Activated CD8-positive, alpha-beta T cell treated with anti-CD3 and anti-CD28 coated beads for 36 hours (primary cell): ENCODE measurements at regions of chr11 and their contacts with region 1.

Region 1: DNA sequence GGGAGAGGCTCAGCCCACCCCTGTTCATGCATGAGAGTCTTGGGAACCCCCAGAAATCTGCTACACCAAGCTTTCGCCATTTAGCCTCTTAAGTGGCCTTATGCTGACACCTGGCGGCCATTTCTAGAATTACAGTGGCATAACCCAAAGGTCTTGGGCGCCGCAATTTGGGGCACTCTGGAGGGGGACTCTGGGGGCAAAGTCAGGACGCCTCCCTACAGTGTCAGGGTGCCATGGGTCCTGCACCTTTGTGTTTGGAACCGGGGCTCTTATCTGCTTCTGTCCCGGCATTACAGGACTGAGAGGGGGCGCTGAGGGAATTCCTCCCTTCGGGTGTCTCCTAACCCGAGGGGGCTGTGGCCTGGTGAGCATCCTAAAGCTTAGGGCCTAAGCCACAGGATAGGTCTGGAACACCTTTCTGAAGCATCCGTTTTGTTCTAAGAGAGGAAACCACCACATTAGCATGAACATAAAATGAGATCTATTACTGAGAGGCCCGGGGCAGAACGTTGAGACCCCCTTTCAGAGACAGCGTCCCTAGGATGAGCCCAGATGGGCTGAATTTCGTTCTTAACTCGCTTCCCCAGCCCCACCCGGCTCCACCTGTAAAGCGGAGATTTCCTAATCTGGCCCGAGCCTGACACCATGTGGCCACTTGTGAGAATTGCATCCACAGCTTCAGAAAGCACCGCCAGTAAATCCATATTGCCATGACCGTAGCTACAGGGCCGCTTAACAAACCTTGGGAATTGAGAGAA is 9.3 kb downstream of the INS start:
- DNase-seq: peak; percentile 91
- ATAC-seq: peak; percentile 82
- H3K4me3 Mint-ChIP-seq: no peak overlapping the region
- H3K27ac Mint-ChIP-seq: no peak overlapping the region
- H3K4me1 Mint-ChIP-seq: peaks cover 10% of the 10 kb centered on the region
- H3K27me3 Mint-ChIP-seq: peaks cover 36% of the 10 kb centered on the region
- CTCF ChIP-seq: peak; percentile 86

Region 2: DNA sequence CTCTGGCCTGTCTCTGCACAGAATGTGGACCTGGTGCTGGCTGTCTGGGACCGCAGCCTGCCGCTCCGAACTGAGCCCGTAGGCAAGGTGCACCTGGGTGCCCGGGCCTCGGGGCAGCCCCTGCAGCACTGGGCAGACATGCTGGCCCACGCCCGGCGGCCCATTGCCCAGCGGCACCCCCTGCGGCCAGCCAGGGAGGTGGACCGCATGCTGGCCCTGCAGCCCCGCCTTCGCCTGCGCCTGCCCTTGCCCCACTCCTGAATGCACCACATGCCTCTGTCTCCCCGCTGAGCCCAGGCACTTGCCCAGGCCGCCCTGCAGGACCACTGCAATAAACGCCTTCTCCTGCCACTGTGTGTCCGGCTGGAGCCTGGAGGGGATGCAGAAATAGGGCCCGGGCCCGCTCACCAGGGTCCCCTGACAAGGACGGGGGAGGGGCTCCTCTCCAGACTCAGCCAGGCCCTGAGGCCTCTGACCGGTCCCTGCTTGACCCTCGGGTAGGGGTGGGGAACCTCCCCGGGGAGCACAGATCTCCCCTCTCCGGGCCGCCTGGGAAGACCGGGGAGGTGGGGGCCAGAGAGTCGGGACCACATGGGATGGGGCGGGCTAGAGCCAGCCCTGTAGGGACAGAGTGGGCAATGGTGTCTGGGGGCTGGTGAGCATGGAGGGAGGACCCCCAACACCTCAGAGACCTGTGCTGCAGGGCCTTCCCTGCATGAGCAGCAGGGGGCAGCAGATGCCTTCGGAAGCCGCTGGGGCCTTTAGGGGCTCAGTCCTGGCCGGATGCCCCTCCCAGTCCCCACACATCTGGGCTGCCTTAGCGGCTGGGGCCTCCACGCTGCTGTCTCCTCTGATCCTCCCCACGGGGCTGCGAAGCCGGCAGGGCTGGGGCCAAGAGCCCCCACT is 314.3 kb before region 1 on chr11:
- CTCF ChIA-PET with region 1: interaction called, 21 read pairs
- POLR2A ChIA-PET with region 1: no interaction called
- intact Hi-C with region 1: loop called (anchors 5 kb)
- DNase-seq: peak; percentile 91
- ATAC-seq: peak; percentile 97
- H3K4me3 Mint-ChIP-seq: no peak overlapping the region
- H3K27ac Mint-ChIP-seq: no peak overlapping the region
- H3K4me1 Mint-ChIP-seq: peaks cover 6% of the 10 kb centered on the region
- H3K27me3 Mint-ChIP-seq: no peaks in the 10 kb centered on the region
- CTCF ChIP-seq: peak; percentile 94

Region 3: GRCh38 chr11:1946812-1947484 is 204.7 kb before region 1 on chr11 and contains the start of gene MRPL23:
- CTCF ChIA-PET with region 1: interaction called, 11 read pairs
- POLR2A ChIA-PET with region 1: no interaction called
- intact Hi-C with region 1: no loop called
- DNase-seq: peak; percentile 29
- ATAC-seq: peak; percentile 88
- H3K4me3 Mint-ChIP-seq: no peak within 1 kb of the TSS
- H3K27ac Mint-ChIP-seq: no peak within 1 kb of the TSS
- H3K4me1 Mint-ChIP-seq: no peaks in the 10 kb centered on the region
- H3K27me3 Mint-ChIP-seq: no peaks in the 10 kb centered on the region
- CTCF ChIP-seq: no peak
- total RNA-seq, gene MRPL23: 134 to 145 TPM

Region 4: DNA sequence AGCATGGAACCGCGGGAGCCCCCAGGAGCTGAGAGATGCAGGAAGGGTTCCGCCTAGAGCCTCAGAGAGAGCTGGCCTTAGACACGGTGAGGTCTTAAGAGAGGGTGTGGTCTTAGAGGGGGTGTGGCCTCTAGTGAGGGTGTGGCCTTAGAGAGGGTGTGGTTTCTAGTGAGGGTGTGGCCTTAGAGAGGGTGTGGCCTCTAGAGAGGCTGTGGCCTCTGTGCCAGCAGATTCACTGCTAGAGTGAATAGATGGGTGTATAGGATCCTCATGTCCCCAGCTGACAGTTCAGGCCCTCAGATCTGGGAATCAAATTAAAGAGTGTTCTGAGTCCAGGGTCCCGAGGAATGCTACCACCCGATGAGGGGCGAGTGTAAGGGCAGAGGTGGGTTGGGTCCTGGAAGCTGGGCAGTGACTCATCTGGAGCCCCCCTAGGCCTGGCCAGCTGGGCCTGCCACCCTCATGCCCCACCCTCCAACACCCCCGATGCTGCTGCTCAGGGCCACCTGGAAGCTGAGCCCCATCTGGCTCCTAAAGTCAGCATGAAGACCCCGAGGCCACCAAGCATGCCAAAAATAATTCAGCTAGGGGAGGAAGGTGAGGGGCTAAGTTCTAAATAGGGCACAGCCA is 62.0 kb before region 1 on chr11:
- CTCF ChIA-PET with region 1: interaction called, 20 read pairs
- POLR2A ChIA-PET with region 1: no interaction called
- intact Hi-C with region 1: no loop called
- DNase-seq: peak; percentile 61
- ATAC-seq: peak; percentile 99
- H3K4me3 Mint-ChIP-seq: no peak overlapping the region
- H3K27ac Mint-ChIP-seq: no peak overlapping the region
- H3K4me1 Mint-ChIP-seq: peaks cover 6% of the 10 kb centered on the region
- H3K27me3 Mint-ChIP-seq: peaks cover 10% of the 10 kb centered on the region
- CTCF ChIP-seq: no peak

Region 5: GRCh38 chr11:2137202-2138071 is 14.2 kb before region 1 on chr11:
- CTCF ChIA-PET with region 1: interaction called, 87 read pairs
- POLR2A ChIA-PET with region 1: interaction called, 4 read pairs
- intact Hi-C with region 1: no loop called
- DNase-seq: no peak
- ATAC-seq: no peak
- H3K4me3 Mint-ChIP-seq: peak overlapping the region; percentile 26
- H3K27ac Mint-ChIP-seq: no peak overlapping the region
- H3K4me1 Mint-ChIP-seq: peaks cover 20% of the 10 kb centered on the region
- H3K27me3 Mint-ChIP-seq: peaks cover 60% of the 10 kb centered on the region
- CTCF ChIP-seq: no peak

Region 6: GRCh38 chr11:2180347-2180746 is 28.7 kb after region 1 on chr11:
- CTCF ChIA-PET with region 1: no interaction called
- POLR2A ChIA-PET with region 1: no interaction called
- intact Hi-C with region 1: no loop called
- DNase-seq: no peak
- ATAC-seq: no peak
- H3K4me3 Mint-ChIP-seq: no peak overlapping the region
- H3K27ac Mint-ChIP-seq: no peak overlapping the region
- H3K4me1 Mint-ChIP-seq: no peaks in the 10 kb centered on the region
- H3K27me3 Mint-ChIP-seq: peaks cover 5% of the 10 kb centered on the region
- CTCF ChIP-seq: no peak

Region 7: DNA sequence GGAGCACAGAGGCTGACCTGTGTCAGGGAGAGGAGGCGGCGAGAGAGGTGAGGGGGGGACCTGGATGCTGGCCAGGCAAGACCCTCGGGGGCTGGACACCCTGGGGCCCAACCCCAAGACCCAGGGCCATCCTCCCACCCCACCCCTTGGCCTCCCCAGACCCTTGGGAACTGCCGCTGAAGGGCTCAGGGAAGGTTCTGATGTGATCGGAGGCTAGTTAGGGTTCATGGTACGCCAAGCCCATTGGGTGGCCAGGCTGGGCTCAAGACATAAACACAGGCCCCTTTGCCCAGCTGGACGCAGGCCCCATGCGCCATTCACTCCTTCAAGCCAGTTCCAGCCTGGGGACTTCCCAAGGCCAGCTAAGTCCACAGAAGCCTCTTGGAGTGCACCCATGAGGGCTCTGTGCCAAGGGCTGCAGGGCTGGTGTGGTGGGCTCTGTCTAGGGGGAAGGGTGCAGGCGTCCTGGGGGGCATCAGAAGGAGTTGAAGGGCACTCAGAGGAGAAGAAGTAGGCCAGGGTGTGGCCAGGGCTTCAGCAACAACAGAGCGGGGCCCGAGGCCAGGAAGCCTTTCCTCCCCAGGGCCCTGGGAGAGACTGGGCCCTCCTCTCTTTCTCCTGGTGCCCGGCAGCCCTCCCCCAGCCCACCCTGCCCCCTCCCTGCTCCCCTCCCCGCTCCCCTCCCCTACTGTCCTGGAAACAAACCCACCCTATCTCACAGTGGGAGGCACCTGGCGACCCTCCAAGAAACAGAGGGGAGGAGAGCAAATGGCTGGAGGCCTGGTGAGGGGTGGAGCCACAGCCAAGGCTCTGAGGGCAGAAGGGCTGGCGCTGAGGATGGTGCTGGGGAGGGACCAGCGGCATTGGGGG is 163.1 kb after region 1 on chr11:
- CTCF ChIA-PET with region 1: no interaction called
- POLR2A ChIA-PET with region 1: no interaction called
- intact Hi-C with region 1: no loop called
- DNase-seq: no peak
- ATAC-seq: no peak
- H3K4me3 Mint-ChIP-seq: no peak overlapping the region
- H3K27ac Mint-ChIP-seq: no peak overlapping the region
- H3K4me1 Mint-ChIP-seq: peaks cover 15% of the 10 kb centered on the region
- H3K27me3 Mint-ChIP-seq: no peaks in the 10 kb centered on the region
- CTCF ChIP-seq: no peak